GM12878 (cell line): ENCODE measurements at regions of chrX and their contacts with region 1.

Region 1: GRCh38 chrX:131821945-131822622 is 201.0 kb upstream of the STK26 start:
- DNase-seq: peak; percentile 85
- ATAC-seq: peak; percentile 80
- H3K4me3 ChIP-seq: peak overlapping the region; percentile 64; the same call in 1 of the 2 replicates
- H3K27ac ChIP-seq: peak overlapping the region; percentile 63
- H3K4me1 ChIP-seq: peaks cover 4% of the 10 kb centered on the region; the same call in 1 of the 2 replicates
- H3K27me3 ChIP-seq: no peaks in the 10 kb centered on the region
- CTCF ChIP-seq: peak; percentile 22 to 71 (median 48); a peak in 4 of 6 replicates
- EP300 ChIP-seq: 0 out of 4 replicates have a peak, but pooled peaks of 1 of the 2 experiments have one; percentile 32
- POLR2A ChIP-seq: no peak
- RAD21 ChIP-seq: peak; percentile 70

Region 2: GRCh38 chrX:131741103-131741581 is 80.9 kb before region 1 on chrX:
- CTCF ChIA-PET with region 1: interaction called, 7 read pairs
- POLR2A ChIA-PET with region 1: no interaction called
- RAD21 ChIA-PET with region 1: interaction called, 17 read pairs
- SMC1A ChIA-PET with region 1: interaction called, 4 read pairs
- in situ Hi-C with region 1: no loop called
- intact Hi-C with region 1: no loop called
- DNase-seq: peak; percentile 87
- ATAC-seq: peak; percentile 83
- H3K4me3 ChIP-seq: peak overlapping the region; percentile 63
- H3K27ac ChIP-seq: peak overlapping the region; percentile 95
- H3K4me1 ChIP-seq: no peaks in the 10 kb centered on the region
- H3K27me3 ChIP-seq: no peaks in the 10 kb centered on the region
- CTCF ChIP-seq: peak; percentile 22 to 54 (median 43); a peak in 5 of 6 replicates
- EP300 ChIP-seq: no peak
- POLR2A ChIP-seq: 0 out of 2 replicates have a peak, but pooled peaks have one; percentile 28
- RAD21 ChIP-seq: peak; percentile 64

Region 3: DNA sequence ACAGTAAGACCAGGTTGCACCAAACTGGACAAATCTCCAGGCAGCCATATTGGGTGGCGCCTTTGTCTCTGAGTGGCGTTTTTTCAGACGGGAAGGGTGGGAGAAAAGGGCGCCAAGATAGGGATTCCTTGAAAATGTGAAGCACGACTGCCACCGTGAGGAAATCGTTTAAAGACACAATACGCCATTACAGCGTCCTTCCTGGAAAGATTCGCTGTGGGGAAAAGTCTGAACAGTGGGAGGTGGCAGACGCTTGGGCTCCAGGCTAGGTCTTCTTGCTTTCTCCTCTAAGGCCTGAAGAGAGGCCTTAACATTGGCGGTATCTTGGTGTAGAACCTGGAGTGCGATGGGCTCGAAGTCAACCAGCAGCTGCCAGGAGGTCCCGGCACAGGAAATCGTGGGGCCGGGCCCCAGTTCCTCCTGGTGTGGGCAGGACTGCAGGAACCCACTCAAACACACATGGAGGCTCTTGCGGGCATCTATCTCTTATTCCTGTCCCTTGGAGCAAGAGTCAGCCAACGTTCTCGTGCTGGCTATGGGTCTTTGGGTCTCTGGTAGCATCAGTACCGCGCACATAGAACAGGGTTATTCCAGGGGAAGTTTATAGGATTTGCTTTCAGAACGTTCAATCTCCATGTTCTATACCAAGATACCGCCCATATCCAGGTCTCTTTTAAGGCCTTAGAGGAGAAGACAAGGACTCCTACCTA is 69.4 kb before region 1 on chrX:
- CTCF ChIA-PET with region 1: interaction called, 3 read pairs
- POLR2A ChIA-PET with region 1: no interaction called
- RAD21 ChIA-PET with region 1: no interaction called
- SMC1A ChIA-PET with region 1: interaction called, 3 read pairs
- in situ Hi-C with region 1: no loop called
- intact Hi-C with region 1: loop called (anchors 1 kb)
- DNase-seq: peak; percentile 87
- ATAC-seq: peak; percentile 82
- H3K4me3 ChIP-seq: peak overlapping the region; percentile 38; the same call in 1 of the 2 replicates
- H3K27ac ChIP-seq: peak overlapping the region; percentile 94
- H3K4me1 ChIP-seq: no peaks in the 10 kb centered on the region
- H3K27me3 ChIP-seq: no peaks in the 10 kb centered on the region
- CTCF ChIP-seq: peak; percentile 26 to 54 (median 36); a peak in 4 of 6 replicates
- EP300 ChIP-seq: no peak
- POLR2A ChIP-seq: no peak
- RAD21 ChIP-seq: peak; percentile 70

Region 4: GRCh38 chrX:131783555-131784308 is 38.4 kb before region 1 on chrX:
- CTCF ChIA-PET with region 1: interaction called, 4 read pairs
- POLR2A ChIA-PET with region 1: no interaction called
- RAD21 ChIA-PET with region 1: interaction called, 5 read pairs
- SMC1A ChIA-PET with region 1: no interaction called
- in situ Hi-C with region 1: no loop called
- intact Hi-C with region 1: loop called (anchors 5 kb)
- DNase-seq: peak; percentile 90
- ATAC-seq: peak; percentile 74
- H3K4me3 ChIP-seq: peak overlapping the region; percentile 9; the same call in 1 of the 2 replicates
- H3K27ac ChIP-seq: no peak overlapping the region
- H3K4me1 ChIP-seq: no peaks in the 10 kb centered on the region
- H3K27me3 ChIP-seq: no peaks in the 10 kb centered on the region
- CTCF ChIP-seq: peak; percentile 41 to 71 (median 51); a peak in 5 of 6 replicates
- EP300 ChIP-seq: no peak
- POLR2A ChIP-seq: no peak
- RAD21 ChIP-seq: peak; percentile 77